MCF 10A (cell line): ENCODE measurements at regions of chr10 and their contacts with region 1.

Region 1: GRCh38 chr10:53209944-53210611 is 437.5 kb upstream of the MBL2 start:
- DNase-seq: peak; percentile 49
- H3K4me3 Mint-ChIP-seq: no peak overlapping the region
- H3K27ac Mint-ChIP-seq: no peak overlapping the region
- H3K4me1 Mint-ChIP-seq: no peaks in the 10 kb centered on the region
- H3K27me3 Mint-ChIP-seq: no peaks in the 10 kb centered on the region
- CTCF ChIP-seq: peak; percentile 45

Region 2: DNA sequence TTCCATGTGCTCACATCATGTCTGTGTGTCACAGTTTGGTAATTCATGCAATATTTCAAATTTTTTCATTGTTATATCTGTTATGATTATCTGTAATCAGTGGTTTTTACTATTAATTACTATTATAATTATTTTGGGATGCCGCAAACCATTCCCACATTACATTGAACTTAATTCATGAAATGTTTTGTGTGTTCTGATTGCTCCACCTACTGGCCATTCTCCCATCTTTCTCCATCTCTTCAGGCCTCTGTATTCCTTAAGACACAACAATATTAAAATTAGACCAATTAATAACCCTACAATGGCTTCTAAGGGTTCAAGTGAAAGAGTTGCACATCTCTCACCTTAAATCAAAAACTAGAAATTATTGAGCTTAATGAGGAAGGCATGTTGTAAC is 1192.5 kb after region 1 on chr10:
- CTCF ChIA-PET with region 1: interaction called, 3 read pairs
- POLR2A ChIA-PET with region 1: no interaction called
- intact Hi-C with region 1: loop called (anchors 1 kb)
- DNase-seq: peak; percentile 59
- H3K4me3 Mint-ChIP-seq: no peak overlapping the region
- H3K27ac Mint-ChIP-seq: no peak overlapping the region
- H3K4me1 Mint-ChIP-seq: no peaks in the 10 kb centered on the region
- H3K27me3 Mint-ChIP-seq: no peaks in the 10 kb centered on the region
- CTCF ChIP-seq: peak; percentile 62